Calu3 (cell line): ENCODE measurements at regions of chr6 and their contacts with region 1.

Region 1: GRCh38 chr6:43454696-43455530 is 435 bp downstream of the DLK2 start:
- DNase-seq: peak; percentile 96
- H3K4me3 Mint-ChIP-seq: peak overlapping the region; percentile 70
- H3K27ac Mint-ChIP-seq: peak overlapping the region; percentile 16
- H3K4me1 Mint-ChIP-seq: peaks cover 17% of the 10 kb centered on the region
- H3K27me3 Mint-ChIP-seq: peaks cover 37% of the 10 kb centered on the region
- CTCF ChIP-seq: peak; percentile 49

Region 2: DNA sequence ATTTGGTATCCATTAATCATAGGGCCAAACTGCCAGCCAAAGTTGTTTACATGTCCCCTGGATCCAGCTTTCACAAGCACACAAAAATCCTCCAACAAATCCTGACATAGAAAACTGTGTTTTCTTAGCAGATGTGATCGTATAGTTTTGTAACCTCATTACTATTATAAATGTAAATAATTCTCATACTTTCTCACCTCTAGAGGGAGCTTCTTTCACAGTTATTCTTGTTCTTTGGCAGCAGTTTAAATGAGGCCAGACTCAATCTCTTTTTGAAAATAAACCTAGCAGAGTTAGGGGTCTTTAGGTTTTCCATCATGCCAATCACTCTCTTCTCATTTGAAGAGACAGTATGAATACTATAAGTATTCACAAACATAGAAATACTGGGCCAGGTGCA is 68.4 kb before region 1 on chr6:
- CTCF ChIA-PET with region 1: no interaction called
- intact Hi-C with region 1: loop called (anchors 2 kb)
- DNase-seq: no peak
- H3K4me3 Mint-ChIP-seq: no peak overlapping the region
- H3K27ac Mint-ChIP-seq: no peak overlapping the region
- H3K4me1 Mint-ChIP-seq: no peaks in the 10 kb centered on the region
- H3K27me3 Mint-ChIP-seq: peaks cover 43% of the 10 kb centered on the region
- CTCF ChIP-seq: no peak

Region 3: GRCh38 chr6:43496370-43497128 is 41.6 kb after region 1 on chr6:
- CTCF ChIA-PET with region 1: interaction called, 12 read pairs
- intact Hi-C with region 1: no loop called
- DNase-seq: peak; percentile 75
- H3K4me3 Mint-ChIP-seq: no peak overlapping the region
- H3K27ac Mint-ChIP-seq: no peak overlapping the region
- H3K4me1 Mint-ChIP-seq: peaks cover 42% of the 10 kb centered on the region
- H3K27me3 Mint-ChIP-seq: no peaks in the 10 kb centered on the region
- CTCF ChIP-seq: peak; percentile 89

Region 4: GRCh38 chr6:43506667-43507471 is 52.0 kb after region 1 on chr6:
- CTCF ChIA-PET with region 1: interaction called, 3 read pairs
- intact Hi-C with region 1: loop called (anchors 1 kb)
- DNase-seq: peak; percentile 92
- H3K4me3 Mint-ChIP-seq: no peak overlapping the region
- H3K27ac Mint-ChIP-seq: no peak overlapping the region
- H3K4me1 Mint-ChIP-seq: peaks cover 16% of the 10 kb centered on the region
- H3K27me3 Mint-ChIP-seq: peaks cover 27% of the 10 kb centered on the region
- CTCF ChIP-seq: peak; percentile 99